Activated CD8-positive, alpha-beta memory T cell treated with anti-CD3 and anti-CD28 coated beads, Interleukin-2, amount 10 ng/mL, durations not matched to agents 7 days and 5 days (primary cell): ENCODE measurements at regions of chr14 and their contacts with region 1.

Region 1: GRCh38 chr14:76876076-76876475 is 49.9 kb downstream of the LRRC74A start:
- DNase-seq: peak; percentile 55
- ATAC-seq: peak; percentile 82
- H3K4me3 Mint-ChIP-seq: no peak overlapping the region
- H3K27ac Mint-ChIP-seq: no peak overlapping the region
- H3K4me1 Mint-ChIP-seq: no peaks in the 10 kb centered on the region
- H3K27me3 Mint-ChIP-seq: peaks cover 7% of the 10 kb centered on the region

Region 2: GRCh38 chr14:76820700-76821099 is 55.4 kb before region 1 on chr14:
- CTCF ChIA-PET with region 1: no interaction called
- DNase-seq: no peak
- ATAC-seq: no peak
- H3K4me3 Mint-ChIP-seq: no peak overlapping the region
- H3K27ac Mint-ChIP-seq: no peak overlapping the region
- H3K4me1 Mint-ChIP-seq: no peaks in the 10 kb centered on the region
- H3K27me3 Mint-ChIP-seq: peaks cover 12% of the 10 kb centered on the region

Region 3: DNA sequence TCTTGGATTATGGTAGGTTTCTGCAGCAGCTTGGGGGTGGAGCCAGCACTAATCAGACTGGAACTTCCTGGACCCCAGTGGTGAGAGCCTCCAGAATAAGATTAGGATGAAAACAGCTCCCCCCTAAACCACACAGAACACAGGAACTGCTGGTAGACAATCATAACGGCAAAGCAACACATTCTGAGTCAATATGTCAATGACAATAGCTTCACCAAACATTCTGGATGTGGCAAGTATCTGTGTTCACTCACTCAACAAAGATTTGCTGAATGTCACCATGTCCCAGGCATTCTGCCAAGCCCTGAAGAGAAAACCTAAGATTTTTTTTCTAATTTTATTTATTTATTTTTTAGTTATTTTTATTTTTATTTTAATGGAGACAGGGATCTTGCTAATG is 15.3 kb after region 1 on chr14:
- CTCF ChIA-PET with region 1: interaction called, 18 read pairs
- DNase-seq: no peak
- ATAC-seq: no peak
- H3K4me3 Mint-ChIP-seq: no peak overlapping the region
- H3K27ac Mint-ChIP-seq: no peak overlapping the region
- H3K4me1 Mint-ChIP-seq: no peaks in the 10 kb centered on the region
- H3K27me3 Mint-ChIP-seq: peaks cover 8% of the 10 kb centered on the region

Region 4: DNA sequence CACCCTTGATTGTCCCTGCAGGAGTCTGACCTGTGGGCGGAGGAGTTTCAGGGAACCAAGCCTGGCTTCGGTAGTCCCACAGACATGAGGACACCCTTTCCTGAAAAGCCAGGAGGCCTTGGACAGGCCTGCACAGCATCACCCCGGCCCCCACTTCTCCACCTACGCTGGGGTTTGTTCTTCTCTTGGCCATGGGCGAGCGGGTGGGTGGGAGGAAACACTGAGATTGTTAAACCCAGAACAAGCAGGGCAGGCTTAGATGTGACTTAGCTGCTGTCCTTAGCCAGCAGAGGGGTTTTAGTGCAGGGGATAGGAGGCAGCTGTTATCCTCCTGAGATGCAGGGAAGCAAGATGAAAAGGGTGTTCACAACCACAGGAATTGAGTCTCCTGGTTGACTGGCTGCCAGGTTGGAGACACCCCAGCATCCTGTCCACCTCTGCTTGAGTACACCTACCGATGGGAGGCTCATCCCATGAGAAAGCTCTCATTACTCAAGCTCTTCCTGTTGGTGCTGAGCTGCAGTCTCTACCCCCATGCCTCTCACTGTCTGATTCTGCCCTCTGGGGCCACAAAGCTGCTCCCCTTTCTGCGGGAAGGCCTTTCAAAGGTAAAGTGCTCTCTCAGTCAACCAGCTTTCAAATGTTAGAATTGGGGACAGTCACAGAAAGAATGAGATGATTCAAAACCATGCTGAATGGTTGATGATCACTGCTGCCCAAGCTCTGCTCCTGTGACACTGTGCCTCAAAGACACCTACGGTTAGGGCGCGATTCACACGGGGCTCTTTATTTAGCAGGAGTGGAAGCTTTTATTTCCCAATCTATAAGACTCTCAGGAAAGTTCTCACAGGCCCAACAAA is 66.1 kb after region 1 on chr14:
- CTCF ChIA-PET with region 1: interaction called, 10 read pairs
- DNase-seq: no peak
- ATAC-seq: no peak
- H3K4me3 Mint-ChIP-seq: no peak overlapping the region
- H3K27ac Mint-ChIP-seq: peak overlapping the region; percentile 33
- H3K4me1 Mint-ChIP-seq: peaks cover 18% of the 10 kb centered on the region
- H3K27me3 Mint-ChIP-seq: no peaks in the 10 kb centered on the region

Region 5: DNA sequence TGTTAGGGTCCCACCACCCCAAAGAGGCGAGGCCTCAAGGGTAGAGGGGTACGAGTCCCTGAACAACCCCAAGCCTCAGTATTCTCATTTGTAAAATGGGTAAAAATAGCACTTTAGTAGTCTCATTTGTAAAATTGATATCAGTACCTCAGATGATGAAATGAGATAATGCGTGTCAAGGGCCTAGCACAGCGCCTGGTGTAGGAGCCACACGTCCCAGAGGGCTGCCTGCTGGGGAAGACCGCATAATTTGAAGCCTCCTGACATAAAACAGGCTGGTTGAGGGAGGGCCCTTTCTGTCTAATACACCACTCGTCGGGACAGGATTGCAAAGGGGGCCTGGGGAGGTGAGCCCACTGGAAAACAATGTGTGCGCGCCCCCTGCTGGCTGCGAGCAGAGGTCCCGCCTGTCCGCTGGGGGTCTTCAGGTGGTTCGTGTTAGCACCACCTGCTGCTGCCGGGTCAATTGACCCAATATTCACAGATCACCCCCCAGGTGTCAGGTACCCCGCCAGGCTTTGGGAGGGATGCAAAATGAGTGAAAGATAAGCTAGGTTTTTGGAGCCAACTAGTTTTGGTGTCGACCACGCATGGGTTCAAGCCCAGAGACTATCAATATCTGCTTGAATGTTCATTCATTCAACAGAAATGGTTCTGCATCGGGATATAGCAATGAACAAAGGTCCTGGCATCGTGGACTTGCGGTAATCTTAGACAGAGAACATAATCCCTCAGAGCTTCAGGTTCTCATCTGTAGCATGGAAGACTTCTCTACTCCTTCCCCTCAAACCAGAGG is 177.2 kb after region 1 on chr14:
- CTCF ChIA-PET with region 1: interaction called, 67 read pairs
- DNase-seq: peak; percentile 78
- ATAC-seq: peak; percentile 92
- H3K4me3 Mint-ChIP-seq: no peak overlapping the region
- H3K27ac Mint-ChIP-seq: no peak overlapping the region
- H3K4me1 Mint-ChIP-seq: peaks cover 7% of the 10 kb centered on the region
- H3K27me3 Mint-ChIP-seq: no peaks in the 10 kb centered on the region

Region 6: GRCh38 chr14:77086017-77086736 is 210.1 kb after region 1 on chr14:
- CTCF ChIA-PET with region 1: interaction called, 13 read pairs
- DNase-seq: no peak
- ATAC-seq: peak; percentile 42
- H3K4me3 Mint-ChIP-seq: no peak overlapping the region
- H3K27ac Mint-ChIP-seq: no peak overlapping the region
- H3K4me1 Mint-ChIP-seq: peaks cover 7% of the 10 kb centered on the region
- H3K27me3 Mint-ChIP-seq: peaks cover 23% of the 10 kb centered on the region

Region 7: GRCh38 chr14:77097700-77098528 is 221.8 kb after region 1 on chr14 and contains the start of gene CIPC:
- CTCF ChIA-PET with region 1: interaction called, 71 read pairs
- DNase-seq: peak; percentile 100
- ATAC-seq: peak; percentile 92
- H3K4me3 Mint-ChIP-seq: peak within 1 kb of the TSS; percentile 88
- H3K27ac Mint-ChIP-seq: peak within 1 kb of the TSS; percentile 92
- H3K4me1 Mint-ChIP-seq: peaks cover 37% of the 10 kb centered on the region
- H3K27me3 Mint-ChIP-seq: no peaks in the 10 kb centered on the region
- total RNA-seq, gene CIPC: 11.3 to 12.0 TPM